ENCODE measurements at regions of chr16 and their contacts with region 1.

Region 1: GRCh38 chr16:10964039-10964890 is 19.9 kb downstream of the CLEC16A start:
- DNase-seq: peak; percentile 86
- ATAC-seq: peak; percentile 35
- H3K4me3 ChIP-seq: no peak overlapping the region
- H3K4me3 Mint-ChIP-seq: peak overlapping the region; percentile 70
- H3K27ac ChIP-seq: no peak overlapping the region
- H3K27ac Mint-ChIP-seq: peak overlapping the region; percentile 86
- H3K4me1 ChIP-seq: peaks cover 23 to 27% of the 10 kb centered on the region in 2 donors
- H3K4me1 Mint-ChIP-seq: peaks cover 39% of the 10 kb centered on the region
- H3K27me3 ChIP-seq: no peaks in the 10 kb centered on the region
- H3K27me3 Mint-ChIP-seq: no peaks in the 10 kb centered on the region
- CTCF ChIP-seq: peak; percentile 95

Region 2: DNA sequence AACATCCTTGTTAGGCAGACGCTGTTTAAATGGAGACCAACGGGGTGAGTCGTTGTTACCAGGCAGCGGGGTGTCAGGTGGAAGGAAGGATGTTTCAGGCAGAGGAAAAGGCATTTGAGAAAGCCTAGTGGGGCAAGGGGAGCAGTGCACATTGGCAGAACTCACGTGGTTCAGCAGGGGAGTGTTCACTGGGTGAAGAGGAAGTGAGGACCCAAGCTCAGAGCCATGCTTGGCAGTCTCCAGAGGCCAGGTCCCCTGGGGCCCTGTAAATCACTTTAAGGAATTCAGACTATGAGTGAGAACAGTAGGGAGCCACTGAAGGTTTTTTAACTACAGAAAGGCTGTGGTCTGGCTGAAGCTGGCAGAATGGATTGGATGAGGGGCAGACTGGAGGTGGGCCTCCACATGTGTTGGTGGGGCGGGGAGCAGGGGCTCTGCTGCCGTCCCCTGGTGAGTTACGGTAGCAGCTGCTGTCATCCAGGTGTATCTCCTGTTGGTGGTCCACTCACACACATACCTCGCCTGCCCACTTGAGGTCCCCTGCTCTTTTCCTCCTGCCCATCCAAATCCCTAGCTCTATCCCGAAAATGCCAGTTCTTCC is 14.8 kb before region 1 on chr16:
- CTCF ChIA-PET with region 1: interaction called, 142 read pairs
- POLR2A ChIA-PET with region 1: interaction called, 5 read pairs
- intact Hi-C with region 1: loop called (anchors 1 kb)
- DNase-seq: peak; percentile 91
- ATAC-seq: peak; percentile 91
- H3K4me3 ChIP-seq: peak overlapping the region in 2 of 5 experiments; percentile 8 to 14
- H3K4me3 Mint-ChIP-seq: peak overlapping the region; percentile 80
- H3K27ac ChIP-seq: peak overlapping the region; percentile 67 to 78
- H3K27ac Mint-ChIP-seq: peak overlapping the region; percentile 96
- H3K4me1 ChIP-seq: peaks cover 52 to 63% of the 10 kb centered on the region in 2 donors
- H3K4me1 Mint-ChIP-seq: peaks cover 75% of the 10 kb centered on the region
- H3K27me3 ChIP-seq: no peaks in the 10 kb centered on the region
- H3K27me3 Mint-ChIP-seq: no peaks in the 10 kb centered on the region
- CTCF ChIP-seq: peak; percentile 59

Region 3: DNA sequence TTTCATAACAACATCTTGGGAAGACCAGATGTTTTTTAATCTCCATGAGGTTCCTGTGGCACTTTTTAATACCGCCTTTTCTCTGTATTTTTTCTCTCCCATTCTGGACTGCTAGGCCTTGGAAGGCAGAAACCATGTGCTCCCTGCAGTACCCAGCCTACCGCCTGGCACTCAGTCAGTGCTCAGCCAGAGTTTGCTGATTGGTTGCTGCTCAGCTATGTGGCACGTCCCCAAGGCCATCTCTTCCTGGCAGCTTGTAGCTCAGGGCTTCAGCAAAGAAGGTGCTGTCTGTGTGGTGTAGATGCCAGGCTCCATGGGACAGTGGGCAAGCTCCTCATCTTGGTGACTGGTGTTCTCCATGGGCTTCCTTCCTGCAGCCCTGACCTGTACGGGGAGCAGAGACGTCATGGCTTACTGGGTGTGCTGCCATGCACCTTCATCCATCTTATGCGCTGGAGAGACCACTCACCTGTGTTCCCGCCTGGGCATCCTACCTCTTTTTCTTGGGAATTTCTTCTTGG is 66.8 kb after region 1 on chr16:
- CTCF ChIA-PET with region 1: no interaction called
- POLR2A ChIA-PET with region 1: no interaction called
- intact Hi-C with region 1: no loop called
- DNase-seq: no peak
- ATAC-seq: no peak
- H3K4me3 ChIP-seq: no peak overlapping the region
- H3K4me3 Mint-ChIP-seq: no peak overlapping the region
- H3K27ac ChIP-seq: no peak overlapping the region
- H3K27ac Mint-ChIP-seq: no peak overlapping the region
- H3K4me1 ChIP-seq: no peaks in the 10 kb centered on the region
- H3K4me1 Mint-ChIP-seq: no peaks in the 10 kb centered on the region
- H3K27me3 ChIP-seq: no peaks in the 10 kb centered on the region
- H3K27me3 Mint-ChIP-seq: no peaks in the 10 kb centered on the region
- CTCF ChIP-seq: no peak

Region 4: GRCh38 chr16:11114366-11115164 is 150.3 kb after region 1 on chr16:
- CTCF ChIA-PET with region 1: no interaction called
- POLR2A ChIA-PET with region 1: no interaction called
- intact Hi-C with region 1: no loop called
- DNase-seq: no peak
- ATAC-seq: no peak
- H3K4me3 ChIP-seq: no peak overlapping the region
- H3K4me3 Mint-ChIP-seq: no peak overlapping the region
- H3K27ac ChIP-seq: no peak overlapping the region
- H3K27ac Mint-ChIP-seq: no peak overlapping the region
- H3K4me1 ChIP-seq: no peaks in the 10 kb centered on the region
- H3K4me1 Mint-ChIP-seq: peaks cover 9% of the 10 kb centered on the region
- H3K27me3 ChIP-seq: no peaks in the 10 kb centered on the region
- H3K27me3 Mint-ChIP-seq: no peaks in the 10 kb centered on the region
- CTCF ChIP-seq: no peak

Region 5: DNA sequence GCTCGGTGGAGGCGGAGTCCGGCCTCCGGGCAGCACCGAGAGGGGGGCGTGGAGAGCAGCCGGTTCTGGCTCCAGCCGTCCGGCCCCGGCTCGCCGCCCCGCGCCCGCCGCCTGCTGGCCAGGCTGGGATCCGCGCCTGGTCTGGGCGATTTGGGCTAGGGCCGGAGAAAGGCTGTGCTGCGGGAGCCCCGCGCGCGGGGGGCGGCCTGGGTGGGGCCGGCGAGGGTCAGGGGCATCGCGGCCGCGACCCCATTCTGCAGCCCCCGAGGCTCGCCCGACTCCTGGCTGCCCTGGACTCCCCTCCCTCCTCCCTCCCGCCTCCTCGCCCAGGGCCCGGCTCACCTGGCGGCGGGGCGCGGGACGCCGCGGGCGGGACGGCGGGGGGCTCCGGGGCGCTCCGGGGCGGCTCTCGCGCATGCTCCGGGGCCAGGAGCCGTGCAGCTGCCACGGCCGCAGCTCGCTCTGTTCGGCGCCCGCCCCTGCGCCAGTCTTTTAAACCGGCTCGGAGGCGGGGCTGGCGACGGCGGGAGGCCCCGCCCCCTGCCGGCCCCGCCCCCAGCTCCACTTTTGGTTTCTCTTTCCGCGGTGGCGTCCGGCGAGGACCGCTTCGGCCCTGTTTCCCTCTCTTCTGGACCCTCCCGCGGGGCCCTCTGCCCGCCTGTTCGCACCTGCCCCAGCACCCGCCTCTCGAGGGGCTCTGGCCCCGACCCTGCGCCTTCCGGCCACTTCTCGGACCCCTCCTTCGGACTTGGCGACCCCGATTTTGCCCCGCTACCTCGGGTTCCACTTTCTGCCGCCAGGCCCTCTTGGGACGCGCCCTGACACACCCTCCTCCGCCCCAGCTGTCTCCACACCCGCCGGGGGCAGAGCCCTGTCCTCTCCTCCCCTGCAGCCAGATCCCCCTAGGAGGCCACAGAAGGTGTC is 291.7 kb after region 1 on chr16 and contains the start of gene SOCS1:
- CTCF ChIA-PET with region 1: interaction called, 94 read pairs
- POLR2A ChIA-PET with region 1: interaction called, 32 read pairs
- intact Hi-C with region 1: loop called (anchors 1 kb)
- DNase-seq: peak; percentile 92
- ATAC-seq: peak; percentile 70
- H3K4me3 ChIP-seq: peak within 1 kb of the TSS; percentile 65 to 90 (median 72)
- H3K4me3 Mint-ChIP-seq: peak within 1 kb of the TSS; percentile 99
- H3K27ac ChIP-seq: peak within 1 kb of the TSS; percentile 86 to 90
- H3K27ac Mint-ChIP-seq: peak within 1 kb of the TSS; percentile 99
- H3K4me1 ChIP-seq: peaks cover 50 to 62% of the 10 kb centered on the region in 2 donors
- H3K4me1 Mint-ChIP-seq: peaks cover 53% of the 10 kb centered on the region
- H3K27me3 ChIP-seq: no peaks in the 10 kb centered on the region
- H3K27me3 Mint-ChIP-seq: no peaks in the 10 kb centered on the region
- CTCF ChIP-seq: peak; percentile 86
- total RNA-seq, gene SOCS1: 107 TPM in 2 replicates

Region 6: DNA sequence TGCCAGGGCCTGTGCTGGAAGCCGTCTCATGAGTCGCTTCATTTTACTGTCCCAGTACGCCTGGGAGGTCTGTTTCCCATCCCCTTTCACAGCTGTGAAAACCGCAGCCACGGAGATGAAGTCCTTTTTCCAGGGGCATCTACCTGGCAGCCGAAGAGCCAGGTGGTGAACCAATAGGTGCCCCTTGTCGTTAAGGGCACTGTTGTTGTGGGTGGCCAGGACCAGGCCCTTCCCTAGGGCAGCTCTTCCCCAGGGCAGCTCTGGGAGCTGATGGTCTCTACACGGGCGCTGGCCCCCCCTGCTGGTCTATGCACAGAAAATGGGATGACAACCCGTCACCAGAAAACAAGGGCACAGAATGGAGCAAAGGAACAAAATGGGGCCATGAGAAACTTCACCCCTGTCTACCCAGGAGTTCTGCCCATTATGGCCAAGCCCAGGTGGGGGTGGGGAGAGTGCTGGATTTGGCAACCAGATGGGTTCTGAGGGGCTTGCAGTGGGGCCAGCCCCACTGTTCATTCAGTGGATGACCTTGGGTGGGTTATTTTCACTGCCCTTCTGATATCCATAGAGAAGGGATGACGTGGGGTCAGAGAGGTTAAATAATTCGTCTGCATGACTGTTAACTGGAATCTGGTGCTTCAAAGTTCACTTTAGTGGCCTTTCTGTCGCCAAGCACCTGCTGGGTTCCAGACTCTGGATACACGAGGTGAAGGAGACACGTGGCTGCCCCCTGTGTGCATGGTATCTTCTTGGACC is 392.5 kb after region 1 on chr16:
- CTCF ChIA-PET with region 1: interaction called, 47 read pairs
- POLR2A ChIA-PET with region 1: interaction called, 4 read pairs
- intact Hi-C with region 1: loop called (anchors 1 kb)
- DNase-seq: peak; percentile 74
- ATAC-seq: peak; percentile 35
- H3K4me3 ChIP-seq: no peak overlapping the region
- H3K4me3 Mint-ChIP-seq: peak overlapping the region; percentile 16
- H3K27ac ChIP-seq: no peak overlapping the region
- H3K27ac Mint-ChIP-seq: peak overlapping the region; percentile 37
- H3K4me1 ChIP-seq: peaks cover 42 to 45% of the 10 kb centered on the region in 2 donors
- H3K4me1 Mint-ChIP-seq: peaks cover 53% of the 10 kb centered on the region
- H3K27me3 ChIP-seq: peaks cover 0 to 45% (median 25%) of the 10 kb centered on the region in 4 experiments
- H3K27me3 Mint-ChIP-seq: peaks cover 30% of the 10 kb centered on the region
- CTCF ChIP-seq: peak; percentile 68

Region 7: DNA sequence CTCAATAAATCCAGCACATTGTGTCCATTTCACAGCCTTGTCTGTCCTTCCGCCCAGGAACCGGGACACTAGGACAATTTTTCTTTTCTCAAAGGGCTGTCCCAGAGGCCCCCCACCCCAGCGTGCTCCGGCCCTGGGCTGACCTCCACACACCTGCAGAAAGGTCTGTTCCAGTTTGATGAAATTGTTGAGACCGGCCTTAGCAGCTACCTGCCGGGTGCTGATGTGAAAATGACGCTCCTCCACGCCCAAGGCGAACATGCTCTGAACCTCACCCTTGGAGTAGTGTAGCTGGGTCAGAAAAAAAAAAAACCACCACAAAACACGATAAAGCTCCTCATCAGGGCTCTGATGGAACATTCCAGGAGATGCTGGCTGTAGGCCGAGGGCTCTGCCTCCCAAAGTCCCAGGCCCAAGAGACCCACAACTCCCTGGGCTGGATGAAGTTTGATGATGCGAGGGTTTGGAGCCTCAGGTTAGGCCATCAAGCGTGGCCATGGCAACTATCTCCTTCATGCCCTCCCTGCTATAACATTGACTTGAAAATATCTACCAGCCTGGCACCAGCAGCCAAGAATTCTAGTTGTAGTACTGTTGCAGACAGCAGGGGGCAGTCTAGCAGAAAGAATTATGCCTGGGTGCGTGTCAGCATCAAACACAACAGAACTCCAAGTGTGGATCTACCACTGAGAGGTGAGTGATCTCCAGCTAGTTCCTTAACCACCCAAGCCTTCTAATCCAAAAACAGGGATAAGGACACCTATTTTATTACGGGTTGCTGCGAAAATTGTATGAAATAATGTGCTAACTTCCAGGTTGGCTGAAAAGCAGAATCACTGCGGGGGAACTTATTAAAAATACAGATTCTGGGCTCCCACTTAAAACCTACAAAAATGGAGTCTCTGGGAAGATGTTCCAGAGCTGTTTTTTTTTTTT is 443.1 kb after region 1 on chr16:
- CTCF ChIA-PET with region 1: interaction called, 66 read pairs
- POLR2A ChIA-PET with region 1: no interaction called
- intact Hi-C with region 1: loop called (anchors 2 kb)
- DNase-seq: peak; percentile 78
- ATAC-seq: peak; percentile 71
- H3K4me3 ChIP-seq: no peak overlapping the region
- H3K4me3 Mint-ChIP-seq: no peak overlapping the region
- H3K27ac ChIP-seq: no peak overlapping the region
- H3K27ac Mint-ChIP-seq: no peak overlapping the region
- H3K4me1 ChIP-seq: no peaks in the 10 kb centered on the region
- H3K4me1 Mint-ChIP-seq: peaks cover 2% of the 10 kb centered on the region
- H3K27me3 ChIP-seq: no peaks in the 10 kb centered on the region
- H3K27me3 Mint-ChIP-seq: no peaks in the 10 kb centered on the region
- CTCF ChIP-seq: peak; percentile 83

Region 8: GRCh38 chr16:11586856-11587642 is 622.8 kb after region 1 on chr16 and contains the start of gene LITAF:
- CTCF ChIA-PET with region 1: interaction called, 4 read pairs
- POLR2A ChIA-PET with region 1: no interaction called
- intact Hi-C with region 1: loop called (anchors 10 kb)
- DNase-seq: peak; percentile 78
- ATAC-seq: peak; percentile 59
- H3K4me3 ChIP-seq: peak within 1 kb of the TSS; percentile 71 to 91 (median 75)
- H3K4me3 Mint-ChIP-seq: peak within 1 kb of the TSS; percentile 94
- H3K27ac ChIP-seq: peak within 1 kb of the TSS; percentile 82 to 97
- H3K27ac Mint-ChIP-seq: peak within 1 kb of the TSS; percentile 97
- H3K4me1 ChIP-seq: peaks cover 42 to 50% of the 10 kb centered on the region in 2 donors
- H3K4me1 Mint-ChIP-seq: peaks cover 48% of the 10 kb centered on the region
- H3K27me3 ChIP-seq: no peaks in the 10 kb centered on the region
- H3K27me3 Mint-ChIP-seq: no peaks in the 10 kb centered on the region
- CTCF ChIP-seq: no peak
- total RNA-seq, gene LITAF: 125 and 131 TPM in 2 replicates

Region 9: GRCh38 chr16:11715246-11715947 is 751.1 kb after region 1 on chr16:
- CTCF ChIA-PET with region 1: interaction called, 30 read pairs
- POLR2A ChIA-PET with region 1: no interaction called
- intact Hi-C with region 1: no loop called
- DNase-seq: no peak
- ATAC-seq: no peak
- H3K4me3 ChIP-seq: no peak overlapping the region
- H3K4me3 Mint-ChIP-seq: no peak overlapping the region
- H3K27ac ChIP-seq: no peak overlapping the region
- H3K27ac Mint-ChIP-seq: peak overlapping the region; percentile 42
- H3K4me1 ChIP-seq: peaks cover 0 to 7% of the 10 kb centered on the region in 2 donors
- H3K4me1 Mint-ChIP-seq: peaks cover 25% of the 10 kb centered on the region
- H3K27me3 ChIP-seq: no peaks in the 10 kb centered on the region
- H3K27me3 Mint-ChIP-seq: no peaks in the 10 kb centered on the region
- CTCF ChIP-seq: no peak